GM18951 (cell line): ENCODE measurements at regions of chr3 and their contacts with region 1.

Region 1: DNA sequence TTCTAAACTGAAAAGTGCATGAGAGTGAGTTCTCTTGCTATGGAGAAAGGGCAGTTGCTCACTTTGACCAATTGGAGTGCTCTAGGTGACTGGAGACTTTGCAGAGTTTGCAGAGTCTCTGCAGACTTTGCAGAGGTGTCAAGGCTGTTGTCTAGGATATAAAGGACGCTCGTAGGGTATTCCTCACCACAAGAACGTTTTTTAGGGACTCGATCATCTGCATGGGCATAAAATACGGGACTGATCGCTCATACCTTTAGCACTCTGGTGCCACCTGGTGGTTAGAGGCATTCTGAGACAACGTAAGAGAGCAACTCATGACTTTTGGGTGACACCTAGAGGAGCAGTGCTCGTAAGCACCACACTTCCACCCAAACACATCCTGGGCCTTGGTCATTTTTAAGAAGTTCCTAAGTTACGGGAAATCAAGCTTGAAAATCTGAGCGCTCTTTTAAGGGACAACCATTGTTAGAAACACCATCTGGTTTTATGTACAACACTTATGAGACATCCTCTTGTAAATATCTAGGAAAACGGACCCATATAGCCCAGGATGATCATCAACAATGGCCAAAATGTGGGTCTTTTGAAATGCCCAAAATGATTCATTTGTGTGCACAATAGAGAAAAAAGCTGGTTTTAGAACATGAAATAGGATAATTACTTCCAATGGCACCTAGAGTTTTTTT is 51.6 kb upstream of the XCR1 start:
- POLR2A ChIP-seq: no peak

Region 2: GRCh38 chr3:45760878-45761711 is 317.8 kb before region 1 on chr3:
- in situ Hi-C with region 1: loop called (anchors 10 kb)
- POLR2A ChIP-seq: no peak

Region 3: GRCh38 chr3:45972534-45973402 is 106.1 kb before region 1 on chr3:
- in situ Hi-C with region 1: no loop called
- POLR2A ChIP-seq: no peak

Region 4: GRCh38 chr3:45995236-45996192 is 83.3 kb before region 1 on chr3 and contains the start of gene FYCO1:
- in situ Hi-C with region 1: no loop called
- POLR2A ChIP-seq: peak; percentile 72

Region 5: DNA sequence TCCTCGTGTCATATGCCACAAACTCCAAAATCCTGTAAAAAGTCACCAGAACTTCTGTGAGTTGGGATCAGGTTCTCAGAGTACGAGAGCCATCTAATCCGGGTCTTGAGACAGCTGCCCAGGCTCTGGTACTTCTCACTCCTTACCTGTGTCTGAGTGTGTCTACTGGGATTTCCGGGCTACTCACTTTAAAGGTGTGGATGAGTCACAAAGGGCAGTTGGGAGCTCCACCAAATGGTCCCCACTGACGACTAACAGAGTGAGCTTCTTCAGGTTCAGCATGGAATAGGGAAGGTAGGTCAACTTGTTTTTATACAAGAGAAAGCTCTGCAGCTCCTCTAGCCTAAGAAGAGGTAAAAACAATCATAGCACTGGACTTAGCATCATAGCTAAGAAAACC is 448.4 kb after region 1 on chr3:
- in situ Hi-C with region 1: no loop called
- POLR2A ChIP-seq: no peak

Region 6: DNA sequence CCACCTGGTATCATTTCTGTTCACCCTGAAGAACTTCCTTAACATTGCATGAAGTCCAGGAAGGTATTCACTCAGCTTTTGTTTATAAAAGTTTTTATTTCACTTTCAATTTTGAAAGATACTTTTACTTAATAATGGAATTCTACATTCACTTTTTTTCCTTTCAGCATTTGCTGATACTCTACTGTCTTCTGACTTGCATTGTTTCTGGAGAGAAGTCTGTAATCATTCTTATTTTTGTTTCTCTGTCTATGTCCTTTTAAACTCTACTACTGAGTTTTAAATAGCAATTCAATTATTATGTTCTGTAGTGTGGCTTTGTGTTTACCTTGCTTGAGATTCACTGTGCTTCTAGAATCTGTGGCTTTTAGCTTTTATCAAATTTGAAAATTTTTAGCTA is 742.0 kb after region 1 on chr3:
- in situ Hi-C with region 1: no loop called
- POLR2A ChIP-seq: no peak